ENCODE measurements at regions of chr9 and their contacts with region 1.

Region 1: GRCh38 chr9:91193658-91194391 is 167.9 kb downstream of the AUH start:
- DNase-seq: peak; percentile 86
- H3K4me3 Mint-ChIP-seq: peak overlapping the region; percentile 72
- H3K27ac Mint-ChIP-seq: peak overlapping the region; percentile 97
- H3K4me1 Mint-ChIP-seq: peaks cover 45% of the 10 kb centered on the region
- H3K27me3 Mint-ChIP-seq: no peaks in the 10 kb centered on the region

Region 2: DNA sequence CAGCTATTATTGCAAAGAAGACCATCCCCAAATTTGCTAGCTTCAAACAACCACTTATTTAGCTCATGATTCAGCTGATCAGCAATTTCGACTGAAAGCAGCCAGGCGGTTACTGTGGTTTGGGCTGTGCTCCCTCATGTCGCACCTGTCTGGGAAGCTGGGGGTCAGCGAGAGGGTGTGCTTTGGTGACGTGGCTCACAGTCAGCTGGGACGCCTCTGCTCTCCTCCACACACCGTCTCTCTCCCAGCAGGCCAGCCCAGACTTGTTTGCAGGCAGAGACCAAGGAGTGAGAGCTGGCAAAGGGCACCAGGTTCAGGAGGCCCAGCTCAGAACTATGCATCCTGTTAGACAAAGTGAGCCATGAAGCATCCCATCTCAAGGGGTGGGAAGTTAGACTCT is 251.3 kb before region 1 on chr9:
- CTCF ChIA-PET with region 1: no interaction called
- intact Hi-C with region 1: no loop called
- DNase-seq: no peak
- H3K4me3 Mint-ChIP-seq: no peak overlapping the region
- H3K27ac Mint-ChIP-seq: no peak overlapping the region
- H3K4me1 Mint-ChIP-seq: no peaks in the 10 kb centered on the region
- H3K27me3 Mint-ChIP-seq: peaks cover 5% of the 10 kb centered on the region

Region 3: DNA sequence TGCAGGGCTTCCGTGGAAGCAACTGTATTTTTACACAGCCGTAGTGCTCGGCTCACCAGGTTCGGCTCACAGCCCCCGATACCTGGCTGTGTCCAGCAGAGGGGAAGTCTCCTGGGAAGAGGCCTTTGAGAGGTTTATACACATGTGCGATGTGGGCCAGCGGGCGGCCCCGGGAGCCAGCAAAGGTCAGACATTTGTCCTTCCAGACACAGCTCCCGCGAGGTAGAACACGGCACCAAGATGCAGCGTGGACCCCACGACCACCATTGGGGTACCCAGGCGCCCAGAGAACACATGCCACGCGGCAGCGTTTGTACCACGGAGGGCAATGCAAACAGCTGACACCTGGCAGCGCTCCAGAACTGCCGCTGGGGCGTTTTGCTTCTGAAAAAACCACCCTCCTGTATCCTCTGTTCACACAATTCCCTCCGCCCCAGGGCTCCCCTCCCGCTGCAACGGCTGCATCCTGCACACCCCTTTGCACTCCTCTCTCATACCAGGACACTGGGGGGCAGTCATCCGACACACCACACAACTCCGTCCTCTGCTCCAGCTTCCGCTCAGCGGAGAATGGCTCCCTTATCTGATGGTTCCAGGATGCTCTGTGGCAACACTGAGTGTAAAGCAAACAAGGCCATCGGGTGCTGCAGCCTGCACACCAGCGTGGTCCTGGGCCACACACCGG is 156.9 kb before region 1 on chr9:
- CTCF ChIA-PET with region 1: no interaction called
- intact Hi-C with region 1: loop called (anchors 1 kb)
- DNase-seq: peak; percentile 87
- H3K4me3 Mint-ChIP-seq: peak overlapping the region; percentile 42
- H3K27ac Mint-ChIP-seq: no peak overlapping the region
- H3K4me1 Mint-ChIP-seq: peaks cover 27% of the 10 kb centered on the region
- H3K27me3 Mint-ChIP-seq: peaks cover 36% of the 10 kb centered on the region

Region 4: DNA sequence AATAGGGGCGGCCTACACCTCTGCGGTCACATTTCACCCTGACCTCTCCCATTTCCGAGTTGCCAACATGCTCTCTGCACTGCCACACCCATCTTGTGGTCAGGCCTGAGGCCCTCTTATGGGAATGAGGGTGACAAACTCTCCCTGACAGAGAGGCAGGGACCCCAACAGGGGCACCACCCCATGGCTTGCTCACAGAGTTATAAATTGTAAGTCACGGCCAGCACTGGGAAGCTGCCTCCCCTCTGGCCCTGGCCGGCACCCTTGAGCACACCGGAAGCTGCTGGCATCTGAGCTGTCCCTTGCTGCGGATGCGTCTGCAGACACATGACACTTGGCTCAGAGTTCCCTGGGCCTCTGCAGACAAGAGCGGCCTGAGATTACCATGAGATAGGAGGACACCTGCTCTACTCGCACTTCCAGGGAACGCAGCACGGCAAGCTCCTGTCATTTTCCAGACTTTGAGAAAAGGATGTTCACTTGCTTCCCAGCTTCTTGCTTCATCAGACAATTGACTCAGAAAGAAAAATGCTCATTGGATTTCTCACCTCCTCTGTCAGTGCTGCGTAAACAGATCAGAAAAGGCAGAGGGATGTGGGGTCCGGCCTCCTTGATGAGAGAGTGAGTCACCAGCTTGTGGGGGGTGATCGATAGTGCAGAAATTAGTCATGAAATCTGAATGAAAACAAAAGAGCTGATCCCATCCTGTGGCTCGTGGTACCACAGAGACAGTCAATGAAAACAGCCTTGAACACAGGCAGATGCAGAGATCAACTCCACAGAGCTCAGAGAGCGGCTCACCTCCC is 122.4 kb before region 1 on chr9:
- CTCF ChIA-PET with region 1: no interaction called
- intact Hi-C with region 1: loop called (anchors 1 kb)
- DNase-seq: peak; percentile 85
- H3K4me3 Mint-ChIP-seq: no peak overlapping the region
- H3K27ac Mint-ChIP-seq: peak overlapping the region; percentile 57
- H3K4me1 Mint-ChIP-seq: peaks cover 11% of the 10 kb centered on the region
- H3K27me3 Mint-ChIP-seq: peaks cover 13% of the 10 kb centered on the region

Region 5: GRCh38 chr9:91101611-91102168 is 92.1 kb before region 1 on chr9:
- CTCF ChIA-PET with region 1: no interaction called
- intact Hi-C with region 1: loop called (anchors 1 kb)
- DNase-seq: peak; percentile 97
- H3K4me3 Mint-ChIP-seq: peak overlapping the region; percentile 59
- H3K27ac Mint-ChIP-seq: peak overlapping the region; percentile 14
- H3K4me1 Mint-ChIP-seq: peaks cover 41% of the 10 kb centered on the region
- H3K27me3 Mint-ChIP-seq: peaks cover 3% of the 10 kb centered on the region

Region 6: GRCh38 chr9:91150998-91151717 is 42.7 kb before region 1 on chr9:
- CTCF ChIA-PET with region 1: interaction called, 23 read pairs
- intact Hi-C with region 1: loop called (anchors 1 kb)
- DNase-seq: peak; percentile 66
- H3K4me3 Mint-ChIP-seq: peak overlapping the region; percentile 15
- H3K27ac Mint-ChIP-seq: peak overlapping the region; percentile 89
- H3K4me1 Mint-ChIP-seq: peaks cover 62% of the 10 kb centered on the region
- H3K27me3 Mint-ChIP-seq: peaks cover 2% of the 10 kb centered on the region

Region 7: DNA sequence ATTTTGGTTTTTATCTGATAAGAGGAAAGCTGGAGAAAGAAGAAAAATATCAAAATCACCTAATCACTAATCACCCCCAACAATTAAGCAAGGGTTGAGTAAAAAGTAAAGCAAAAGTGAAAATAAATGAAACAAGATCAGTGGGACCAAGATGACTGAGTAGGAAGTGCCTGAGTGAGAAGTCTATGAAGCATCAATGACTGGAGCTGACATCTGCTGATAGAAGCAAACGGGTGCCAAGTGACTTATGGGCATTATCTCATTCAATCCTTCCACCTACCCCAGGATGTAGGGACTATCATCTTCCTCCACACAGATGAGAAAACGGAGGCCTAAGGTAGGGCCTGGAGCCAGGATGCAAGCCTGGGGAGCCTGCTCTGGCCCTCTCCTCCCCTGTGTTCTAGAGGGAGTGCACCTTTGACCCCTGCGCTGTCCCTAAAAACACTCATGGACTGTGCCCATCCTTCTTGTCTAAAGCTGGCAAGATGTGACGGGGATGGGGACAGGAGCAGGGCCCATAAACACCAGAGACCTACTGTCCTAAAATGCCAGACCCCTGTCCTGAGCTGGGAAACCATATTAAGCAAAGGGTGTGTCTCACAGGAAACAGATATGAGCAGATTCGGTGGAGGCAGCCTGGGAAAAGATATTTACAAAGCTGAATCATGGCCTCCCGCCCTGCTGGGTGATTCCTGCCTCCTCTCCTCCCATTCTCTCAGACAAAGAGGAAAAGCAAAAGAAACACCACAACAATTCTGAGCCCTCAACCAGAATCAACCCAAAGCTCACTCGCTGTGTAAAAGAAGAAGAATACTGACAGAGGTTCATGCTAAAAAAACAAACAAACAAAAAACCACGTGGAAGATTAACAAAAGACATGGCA is 51.8 kb after region 1 on chr9:
- CTCF ChIA-PET with region 1: no interaction called
- intact Hi-C with region 1: loop called (anchors 1 kb)
- DNase-seq: peak; percentile 58
- H3K4me3 Mint-ChIP-seq: no peak overlapping the region
- H3K27ac Mint-ChIP-seq: peak overlapping the region; percentile 64
- H3K4me1 Mint-ChIP-seq: peaks cover 18% of the 10 kb centered on the region
- H3K27me3 Mint-ChIP-seq: no peaks in the 10 kb centered on the region

Region 8: DNA sequence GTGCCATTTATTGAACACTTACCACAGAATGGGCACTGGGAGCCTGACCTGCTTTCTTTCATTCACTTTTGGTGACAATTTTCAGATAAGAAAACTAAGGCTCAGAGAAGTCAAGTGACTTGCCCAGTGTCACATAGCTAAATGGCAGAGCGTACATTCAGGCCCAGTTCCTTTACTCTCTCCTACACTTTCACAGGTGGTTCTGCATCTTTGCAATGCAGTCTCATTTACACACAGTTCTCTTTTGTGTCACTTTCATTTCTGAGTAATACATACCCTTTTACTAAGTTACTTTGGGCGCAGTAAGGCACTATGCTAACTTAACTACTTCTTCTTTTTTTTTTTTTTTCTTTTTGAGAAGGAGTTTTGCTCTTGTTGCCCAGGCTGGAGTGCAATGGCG is 221.5 kb after region 1 on chr9:
- CTCF ChIA-PET with region 1: no interaction called
- intact Hi-C with region 1: loop called (anchors 1 kb)
- DNase-seq: peak; percentile 56
- H3K4me3 Mint-ChIP-seq: no peak overlapping the region
- H3K27ac Mint-ChIP-seq: peak overlapping the region; percentile 80
- H3K4me1 Mint-ChIP-seq: peaks cover 69% of the 10 kb centered on the region
- H3K27me3 Mint-ChIP-seq: peaks cover 2% of the 10 kb centered on the region

Region 9: GRCh38 chr9:91599564-91599963 is 405.7 kb after region 1 on chr9:
- CTCF ChIA-PET with region 1: no interaction called
- intact Hi-C with region 1: no loop called
- DNase-seq: no peak
- H3K4me3 Mint-ChIP-seq: no peak overlapping the region
- H3K27ac Mint-ChIP-seq: no peak overlapping the region
- H3K4me1 Mint-ChIP-seq: no peaks in the 10 kb centered on the region
- H3K27me3 Mint-ChIP-seq: peaks cover 12% of the 10 kb centered on the region

Measured in activated naive CD4-positive, alpha-beta T cell treated with anti-CD3 and anti-CD28 coated beads for 36 hours (primary cell).